ENCODE measurements at regions of chr5 and their contacts with region 1.

Region 1: DNA sequence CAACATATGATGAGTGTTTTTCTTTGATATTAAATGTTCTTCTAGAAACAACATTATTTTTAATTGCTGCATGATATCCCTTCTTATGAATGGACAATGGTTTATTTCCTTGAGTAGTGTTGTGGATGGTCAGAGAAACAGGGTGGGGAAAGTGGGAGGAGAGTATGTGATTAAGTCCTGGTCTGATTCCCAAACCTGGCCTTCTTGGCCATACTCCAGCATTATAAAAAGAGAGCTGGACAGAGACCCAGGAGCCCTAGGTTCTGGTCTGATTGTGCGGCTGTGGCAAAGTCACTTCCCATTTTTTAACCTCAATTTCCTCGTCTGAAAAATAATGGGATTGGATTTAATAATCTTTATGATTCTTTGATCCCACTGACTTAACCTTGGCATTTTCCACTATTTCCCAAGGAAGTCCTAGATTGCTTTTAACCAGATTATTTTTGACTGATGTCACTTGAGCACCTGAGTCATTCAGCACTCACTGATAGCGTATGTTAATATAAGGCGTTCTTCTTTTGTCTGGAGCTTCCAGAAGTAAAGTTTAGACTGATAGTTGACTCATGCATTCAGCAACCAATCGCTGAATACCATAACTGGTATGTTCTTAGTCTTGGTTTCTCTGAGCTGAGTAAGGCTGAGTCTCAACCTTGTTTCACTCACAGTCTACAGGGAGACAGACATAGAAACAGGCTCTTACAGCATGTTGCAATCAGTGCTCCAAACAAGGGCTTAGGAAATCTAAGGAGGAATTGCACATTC is 26.2 kb downstream of the OSMR start:
- DNase-seq: peak; percentile 76 to 100
- H3K4me3 ChIP-seq: 0 out of 2 replicates have a peak overlapping the region, but pooled peaks have one; percentile 16
- H3K27ac ChIP-seq: peak overlapping the region; percentile 97
- H3K4me1 ChIP-seq: peaks cover 51% of the 10 kb centered on the region
- H3K27me3 ChIP-seq: no peaks in the 10 kb centered on the region
- CTCF ChIP-seq: no peak

Region 2: DNA sequence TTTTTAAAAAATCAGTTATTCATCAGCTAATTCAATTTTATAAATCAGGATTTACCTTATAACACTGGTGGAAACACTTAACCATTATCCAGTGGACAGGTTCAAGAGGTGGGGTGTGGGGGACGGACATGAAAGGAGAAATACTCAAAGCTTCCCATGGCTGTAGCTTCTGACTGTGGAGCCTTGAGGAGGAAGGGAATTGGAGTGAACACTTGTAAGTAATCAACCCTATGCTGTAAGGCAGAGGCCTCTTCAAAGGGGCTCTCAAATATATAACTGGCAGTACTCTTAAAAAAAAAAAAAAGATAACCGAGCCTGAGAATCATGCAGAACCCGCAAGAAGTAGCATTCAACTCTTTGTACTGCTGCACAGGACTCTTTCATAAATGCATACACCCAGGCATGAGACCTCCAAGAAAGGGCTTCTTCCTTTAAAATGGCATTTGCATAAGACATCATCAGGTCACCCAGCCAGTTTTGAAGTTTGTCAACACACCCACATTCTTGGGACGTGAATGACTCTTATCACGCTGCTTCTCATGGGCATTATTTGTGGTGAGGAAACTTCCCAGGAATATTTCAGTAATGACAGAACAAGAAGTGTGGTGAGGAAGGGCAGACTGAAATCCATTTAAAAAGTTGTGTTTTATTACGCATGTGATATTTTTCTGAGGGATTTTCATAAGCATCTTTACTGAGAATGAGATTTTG is 18.1 kb before region 1 on chr5:
- CTCF ChIA-PET with region 1: interaction called, 3 read pairs
- POLR2A ChIA-PET with region 1: interaction called, 18 read pairs
- intact Hi-C with region 1: loop called (anchors 1 kb)
- DNase-seq: peak; percentile 84 to 100
- H3K4me3 ChIP-seq: peak overlapping the region; percentile 17; the same call in 1 of the 2 replicates
- H3K27ac ChIP-seq: peak overlapping the region; percentile 95
- H3K4me1 ChIP-seq: peaks cover 40% of the 10 kb centered on the region
- H3K27me3 ChIP-seq: no peaks in the 10 kb centered on the region
- CTCF ChIP-seq: no peak

Region 3: GRCh38 chr5:39080597-39081204 is 208.7 kb after region 1 on chr5:
- CTCF ChIA-PET with region 1: interaction called, 11 read pairs
- POLR2A ChIA-PET with region 1: no interaction called
- intact Hi-C with region 1: no loop called
- DNase-seq: no peak
- H3K4me3 ChIP-seq: no peak overlapping the region
- H3K27ac ChIP-seq: no peak overlapping the region
- H3K4me1 ChIP-seq: peaks cover 21% of the 10 kb centered on the region
- H3K27me3 ChIP-seq: no peaks in the 10 kb centered on the region
- CTCF ChIP-seq: peak; percentile 76

Region 4: GRCh38 chr5:39209924-39210323 is 338.0 kb after region 1 on chr5:
- CTCF ChIA-PET with region 1: no interaction called
- POLR2A ChIA-PET with region 1: no interaction called
- intact Hi-C with region 1: no loop called
- DNase-seq: no peak
- H3K4me3 ChIP-seq: no peak overlapping the region
- H3K27ac ChIP-seq: no peak overlapping the region
- H3K4me1 ChIP-seq: no peaks in the 10 kb centered on the region
- H3K27me3 ChIP-seq: no peaks in the 10 kb centered on the region
- CTCF ChIP-seq: no peak